ENCODE measurements at regions of chr4 and their contacts with region 1.

Region 1: DNA sequence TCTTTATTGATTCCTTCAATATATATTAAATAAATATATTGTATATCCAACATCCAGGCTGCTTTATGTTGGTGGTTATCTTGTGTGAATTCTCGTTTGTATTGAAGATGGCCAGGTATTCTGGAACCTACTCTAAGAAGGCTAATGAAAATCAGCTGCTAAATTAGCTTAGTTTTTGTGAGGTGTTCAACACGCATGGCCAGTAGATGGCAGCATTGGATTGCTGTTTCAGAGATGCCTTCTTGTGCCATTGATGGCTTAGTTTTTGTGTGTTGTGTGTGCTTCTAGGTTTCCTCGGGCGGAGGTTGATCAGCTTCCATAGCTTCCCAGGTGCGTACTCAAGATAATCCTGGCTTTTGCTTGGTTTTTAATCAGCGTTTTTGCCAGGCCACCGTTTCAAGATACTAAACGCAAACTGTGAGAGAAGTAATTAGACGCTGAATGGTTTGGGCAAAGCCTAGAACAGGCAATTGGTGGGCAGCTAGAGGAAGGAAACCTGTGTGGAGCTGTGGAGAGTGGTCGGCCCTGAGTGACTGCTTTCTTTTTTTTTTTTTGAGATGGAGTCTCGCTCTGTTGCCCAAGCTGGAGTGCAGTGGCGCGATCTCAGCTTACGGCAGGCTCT is 15.1 kb downstream of the NOCT start:
- DNase-seq: peak; percentile 73
- CTCF ChIP-seq: peak; percentile 82

Region 2: DNA sequence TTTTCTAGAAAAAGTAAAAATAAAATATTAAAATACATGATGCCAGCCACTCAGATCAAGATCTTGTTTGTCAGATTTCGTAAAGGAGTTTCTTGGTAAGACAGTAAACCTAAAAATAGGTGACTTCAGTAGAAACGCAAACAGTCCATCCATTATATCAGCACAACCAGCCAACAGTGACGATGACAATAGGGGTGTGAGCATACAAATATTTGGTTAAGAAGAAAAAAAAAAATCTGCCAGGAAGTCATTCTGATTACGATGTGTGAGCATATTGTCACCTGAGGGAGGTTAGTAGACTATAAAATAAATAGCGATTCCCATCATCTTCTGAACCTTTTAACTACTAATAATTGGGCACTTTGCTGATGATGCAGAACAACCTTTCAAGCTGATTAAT is 826.2 kb before region 1 on chr4:
- CTCF ChIA-PET with region 1: no interaction called
- POLR2A ChIA-PET with region 1: no interaction called
- DNase-seq: no peak
- CTCF ChIP-seq: no peak

Region 3: DNA sequence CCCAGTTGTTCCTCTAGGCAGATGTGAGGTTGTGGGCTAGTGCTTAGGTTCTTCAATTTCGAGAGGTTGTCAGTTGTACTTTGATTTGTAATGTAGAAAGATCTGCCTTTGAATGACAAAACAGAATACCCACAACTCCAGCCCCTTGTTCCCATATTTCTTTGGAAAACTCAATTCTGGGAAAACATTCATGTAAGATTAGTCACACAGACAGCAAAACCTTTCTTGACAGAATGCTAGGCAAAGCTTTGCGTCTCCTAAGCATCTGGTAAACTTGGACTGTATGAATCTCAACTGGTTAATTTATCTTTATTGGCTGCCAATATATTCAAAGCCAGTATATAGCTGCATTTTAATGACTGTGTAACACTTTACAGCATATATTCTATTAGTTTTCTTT is 19.7 kb after region 1 on chr4:
- CTCF ChIA-PET with region 1: interaction called, 88 read pairs
- POLR2A ChIA-PET with region 1: no interaction called
- DNase-seq: no peak
- CTCF ChIP-seq: no peak

Region 4: GRCh38 chr4:139083956-139084803 is 53.5 kb after region 1 on chr4:
- CTCF ChIA-PET with region 1: interaction called, 23 read pairs
- POLR2A ChIA-PET with region 1: no interaction called
- DNase-seq: peak; percentile 83
- CTCF ChIP-seq: no peak

Region 5: DNA sequence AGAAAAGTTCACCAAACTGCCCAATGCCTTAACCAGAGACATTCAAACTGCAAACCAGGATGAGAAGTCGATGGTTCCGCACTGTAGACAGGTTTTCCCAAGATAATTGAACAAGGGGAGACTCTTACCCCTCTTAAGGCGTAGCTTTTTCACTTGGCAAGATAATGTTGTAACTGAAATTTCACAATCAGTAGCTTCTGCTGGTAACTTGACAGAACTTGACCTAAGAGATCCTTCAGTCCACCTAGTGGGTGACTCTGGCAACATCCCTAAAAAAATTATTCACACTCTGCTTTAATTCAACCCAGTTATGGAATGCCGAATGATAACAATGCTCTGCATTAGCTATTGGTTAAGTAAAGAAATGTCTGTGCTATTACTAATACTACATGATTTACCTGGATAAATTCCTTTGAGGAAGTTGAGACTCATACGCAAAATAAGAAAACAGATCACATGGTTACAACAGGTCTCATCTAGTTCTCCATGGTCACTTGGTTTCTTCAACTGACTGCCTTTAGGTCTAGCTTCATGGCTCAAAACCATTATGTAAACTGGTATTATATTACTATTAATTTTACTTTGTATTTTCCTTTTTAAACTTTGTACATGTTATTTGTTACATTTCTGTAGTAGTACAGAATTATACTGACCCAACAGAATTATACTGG is 137.2 kb after region 1 on chr4:
- CTCF ChIA-PET with region 1: interaction called, 11 read pairs
- POLR2A ChIA-PET with region 1: interaction called, 3 read pairs
- DNase-seq: no peak
- CTCF ChIP-seq: peak; percentile 26

Region 6: GRCh38 chr4:139229534-139230039 is 198.9 kb after region 1 on chr4:
- CTCF ChIA-PET with region 1: interaction called, 12 read pairs
- POLR2A ChIA-PET with region 1: no interaction called
- DNase-seq: peak; percentile 52
- CTCF ChIP-seq: peak; percentile 65

Region 7: GRCh38 chr4:139651282-139652194 is 620.8 kb after region 1 on chr4:
- CTCF ChIA-PET with region 1: interaction called, 35 read pairs
- POLR2A ChIA-PET with region 1: no interaction called
- DNase-seq: peak; percentile 58
- CTCF ChIP-seq: peak; percentile 93